GM10248 (cell line): ENCODE measurements at regions of chr1 and their contacts with region 1.

Region 1: GRCh38 chr1:12275369-12275768 is 45.5 kb downstream of the VPS13D start:
- DNase-seq: peak; percentile 36
- CTCF ChIP-seq: peak; percentile 45

Region 2: GRCh38 chr1:12166834-12167492 is 108.4 kb before region 1 on chr1 and contains the start of gene TNFRSF1B:
- CTCF ChIA-PET with region 1: no interaction called
- POLR2A ChIA-PET with region 1: no interaction called
- DNase-seq: peak; percentile 93
- CTCF ChIP-seq: no peak

Region 3: DNA sequence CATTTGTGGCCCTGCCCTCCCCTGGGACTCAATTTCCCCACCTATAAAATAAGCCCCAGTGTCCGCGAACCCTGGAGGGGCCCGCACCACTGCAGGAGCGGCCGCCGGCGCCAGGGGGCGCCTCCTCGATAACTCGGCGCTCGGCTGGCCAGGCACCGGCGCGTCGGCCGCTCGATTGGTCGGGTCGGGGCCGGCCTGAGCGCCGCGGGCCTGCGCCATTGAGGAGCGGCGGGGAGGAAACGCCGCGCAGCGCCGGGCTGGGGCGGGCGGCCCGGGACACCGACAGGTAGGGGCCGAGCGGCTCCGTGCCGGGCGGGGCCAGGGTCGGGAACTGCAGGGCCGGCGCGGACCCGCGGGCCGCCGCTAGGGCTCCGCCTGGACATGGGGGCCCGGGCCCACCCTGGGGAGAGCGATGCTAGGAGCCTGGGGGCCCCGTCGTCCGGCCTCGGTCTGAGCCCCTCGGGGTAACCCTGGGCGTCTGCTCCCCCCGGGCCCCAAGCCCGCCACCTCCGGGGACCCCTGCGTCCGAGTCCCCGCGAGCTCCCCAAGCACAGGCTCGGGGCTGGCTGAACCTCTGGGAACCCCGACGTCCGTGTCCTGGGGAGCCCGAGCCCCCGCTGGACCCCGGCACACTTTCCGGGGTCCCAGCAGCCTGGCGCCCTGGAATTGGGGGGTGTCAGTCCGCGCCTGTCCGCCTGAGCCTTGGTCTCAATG is 45.4 kb before region 1 on chr1 and contains the start of gene VPS13D:
- CTCF ChIA-PET with region 1: interaction called, 10 read pairs
- POLR2A ChIA-PET with region 1: no interaction called
- DNase-seq: peak; percentile 96
- CTCF ChIP-seq: peak; percentile 94

Region 4: GRCh38 chr1:12290828-12291227 is 15.5 kb after region 1 on chr1:
- CTCF ChIA-PET with region 1: interaction called, 13 read pairs
- POLR2A ChIA-PET with region 1: no interaction called
- DNase-seq: no peak
- CTCF ChIP-seq: no peak

Region 5: GRCh38 chr1:12301518-12302237 is 26.3 kb after region 1 on chr1:
- CTCF ChIA-PET with region 1: interaction called, 10 read pairs
- POLR2A ChIA-PET with region 1: no interaction called
- DNase-seq: no peak
- CTCF ChIP-seq: no peak

Region 6: GRCh38 chr1:12496154-12496913 is 221.0 kb after region 1 on chr1:
- CTCF ChIA-PET with region 1: no interaction called
- POLR2A ChIA-PET with region 1: no interaction called
- DNase-seq: no peak
- CTCF ChIP-seq: no peak

Region 7: DNA sequence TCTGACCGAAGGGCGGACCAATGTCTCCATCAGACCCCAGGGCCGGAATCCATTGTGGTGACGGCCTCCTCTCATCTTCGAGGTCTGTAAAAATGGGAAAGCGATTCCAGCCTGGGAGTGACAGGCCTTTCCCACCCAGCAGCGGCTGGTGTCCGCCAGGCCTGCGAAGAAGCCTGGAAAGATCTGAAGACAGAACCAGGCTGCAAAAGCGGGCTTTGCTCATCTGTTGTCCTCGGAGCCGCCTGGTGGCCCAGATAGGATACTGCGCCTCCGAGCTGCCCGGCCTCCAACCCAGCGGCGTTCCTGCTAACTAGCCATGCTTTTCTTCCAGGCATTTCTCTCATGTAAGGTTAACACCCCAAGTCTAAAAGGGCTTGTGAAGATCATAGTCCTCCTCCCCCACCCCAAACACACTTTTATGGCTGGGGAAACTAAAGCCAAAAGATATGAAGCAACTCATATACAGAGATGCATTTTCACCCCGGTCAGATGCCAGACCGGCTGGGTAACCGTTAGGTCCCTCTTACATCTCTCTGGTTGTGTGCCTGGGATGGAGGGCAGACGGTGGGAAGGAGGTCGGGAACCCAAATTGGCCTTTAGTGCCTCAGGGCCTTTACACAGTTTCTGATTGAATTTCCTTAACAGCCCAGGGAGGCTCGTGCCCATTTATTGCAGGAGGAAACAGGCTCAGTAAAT is 344.6 kb after region 1 on chr1:
- CTCF ChIA-PET with region 1: interaction called, 98 read pairs
- POLR2A ChIA-PET with region 1: no interaction called
- DNase-seq: peak; percentile 85
- CTCF ChIP-seq: peak; percentile 98

Region 8: DNA sequence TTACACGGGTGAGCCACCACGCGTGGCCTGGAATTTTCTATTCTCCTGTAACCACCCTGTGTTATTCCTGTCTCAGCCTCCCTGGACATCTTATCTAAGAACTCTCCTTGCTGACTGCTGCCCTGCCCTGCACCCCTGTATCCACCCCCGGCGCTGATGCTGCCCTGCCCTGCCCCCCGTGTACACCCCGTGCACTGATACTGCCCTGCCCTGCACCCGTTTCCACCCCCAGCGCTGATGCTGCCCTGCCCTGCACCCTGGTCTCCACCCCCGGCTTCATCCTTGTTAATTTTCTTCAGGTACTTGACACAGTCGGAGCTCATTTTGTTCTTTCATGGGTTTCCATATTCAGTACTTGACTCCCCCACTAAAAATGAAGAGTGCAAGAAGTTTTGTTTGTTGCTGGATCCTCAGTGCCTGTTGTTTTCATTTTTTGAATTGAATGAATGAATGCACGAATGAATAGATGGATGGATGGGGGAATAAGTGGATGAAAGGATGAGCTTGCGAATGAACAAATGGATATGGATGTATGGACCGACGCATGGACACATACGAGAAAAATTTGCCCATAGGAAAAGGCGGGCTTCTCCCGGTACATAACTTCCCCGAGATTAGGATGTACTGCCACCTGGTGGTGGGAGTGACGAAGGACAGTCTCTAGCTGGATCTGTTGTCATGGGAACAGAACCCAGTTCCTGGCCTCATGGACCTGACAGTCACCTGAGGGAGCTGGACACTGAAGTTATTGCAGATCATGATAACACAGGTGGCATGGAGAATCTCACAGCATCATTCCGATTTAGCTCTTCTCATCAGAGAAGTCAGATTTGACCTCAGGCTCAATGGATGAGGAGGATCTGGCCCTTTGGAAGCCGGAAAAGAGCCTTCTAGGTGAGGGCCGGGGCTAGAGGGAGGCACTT is 383.4 kb after region 1 on chr1:
- CTCF ChIA-PET with region 1: interaction called, 24 read pairs
- POLR2A ChIA-PET with region 1: no interaction called
- DNase-seq: peak; percentile 90
- CTCF ChIP-seq: peak; percentile 76